ENCODE measurements at regions of chr12 and their contacts with region 1.

Region 1: GRCh38 chr12:111368788-111369495 is at the start of gene PHETA1:
- DNase-seq: peak; percentile 12
- ATAC-seq: peak; percentile 97
- H3K4me3 ChIP-seq: peak within 1 kb of the TSS; percentile 84
- H3K27ac ChIP-seq: peak within 1 kb of the TSS; percentile 83
- H3K4me1 ChIP-seq: peaks cover 21% of the 10 kb centered on the region
- H3K27me3 ChIP-seq: no peaks in the 10 kb centered on the region
- CTCF ChIP-seq: no peak
- total RNA-seq, gene PHETA1: 16.3 TPM

Region 2: GRCh38 chr12:111351026-111351425 is 17.9 kb before region 1 on chr12:
- CTCF ChIA-PET with region 1: interaction called, 10 read pairs
- POLR2A ChIA-PET with region 1: no interaction called
- in situ Hi-C with region 1: no loop called
- intact Hi-C with region 1: no loop called
- DNase-seq: no peak
- ATAC-seq: no peak
- H3K4me3 ChIP-seq: no peak overlapping the region
- H3K27ac ChIP-seq: no peak overlapping the region
- H3K4me1 ChIP-seq: no peaks in the 10 kb centered on the region
- H3K27me3 ChIP-seq: no peaks in the 10 kb centered on the region
- CTCF ChIP-seq: no peak

Region 3: GRCh38 chr12:111616177-111616623 is 247.3 kb after region 1 on chr12:
- CTCF ChIA-PET with region 1: no interaction called
- POLR2A ChIA-PET with region 1: interaction called, 11 read pairs
- in situ Hi-C with region 1: no loop called
- intact Hi-C with region 1: no loop called
- DNase-seq: no peak
- ATAC-seq: no peak
- H3K4me3 ChIP-seq: no peak overlapping the region
- H3K27ac ChIP-seq: no peak overlapping the region
- H3K4me1 ChIP-seq: no peaks in the 10 kb centered on the region
- H3K27me3 ChIP-seq: no peaks in the 10 kb centered on the region
- CTCF ChIP-seq: no peak